ENCODE measurements at regions of chr1 and their contacts with region 1.

Region 1: GRCh38 chr1:56212143-56212542 is 367.2 kb downstream of the PLPP3 start:
- DNase-seq: no peak
- ATAC-seq: no peak
- H3K4me3 ChIP-seq: no peak overlapping the region
- H3K27ac ChIP-seq: no peak overlapping the region
- H3K4me1 ChIP-seq: no peaks in the 10 kb centered on the region
- H3K27me3 ChIP-seq: no peaks in the 10 kb centered on the region
- CTCF ChIP-seq: no peak

Region 2: GRCh38 chr1:56237491-56238064 is 25.4 kb after region 1 on chr1:
- intact Hi-C with region 1: loop called in 1 of 2 experiments (anchors 1 kb)
- DNase-seq: no peak
- ATAC-seq: no peak
- H3K4me3 ChIP-seq: no peak overlapping the region
- H3K27ac ChIP-seq: no peak overlapping the region
- H3K4me1 ChIP-seq: no peaks in the 10 kb centered on the region
- H3K27me3 ChIP-seq: no peaks in the 10 kb centered on the region
- CTCF ChIP-seq: no peak

Region 3: GRCh38 chr1:56265216-56265615 is 53.1 kb after region 1 on chr1:
- intact Hi-C with region 1: no loop called
- DNase-seq: no peak
- ATAC-seq: no peak
- H3K4me3 ChIP-seq: no peak overlapping the region
- H3K27ac ChIP-seq: no peak overlapping the region
- H3K4me1 ChIP-seq: no peaks in the 10 kb centered on the region
- H3K27me3 ChIP-seq: no peaks in the 10 kb centered on the region
- CTCF ChIP-seq: no peak

Region 4: GRCh38 chr1:56339786-56340465 is 127.8 kb after region 1 on chr1:
- intact Hi-C with region 1: no loop called
- DNase-seq: no peak
- ATAC-seq: peak; percentile 75 to 89 (median 81)
- H3K4me3 ChIP-seq: no peak overlapping the region
- H3K27ac ChIP-seq: peak overlapping the region; percentile 38
- H3K4me1 ChIP-seq: peaks cover 22% of the 10 kb centered on the region
- H3K27me3 ChIP-seq: no peaks in the 10 kb centered on the region
- CTCF ChIP-seq: no peak

Region 5: GRCh38 chr1:56409094-56409691 is 197.1 kb after region 1 on chr1:
- intact Hi-C with region 1: no loop called
- DNase-seq: peak; percentile 13 to 61
- ATAC-seq: peak; percentile 71 to 87 (median 74)
- H3K4me3 ChIP-seq: no peak overlapping the region
- H3K27ac ChIP-seq: no peak overlapping the region
- H3K4me1 ChIP-seq: no peaks in the 10 kb centered on the region
- H3K27me3 ChIP-seq: peaks cover 0 to 2% (median 0%) of the 10 kb centered on the region in 3 donors
- CTCF ChIP-seq: peak; percentile 51